Dorsolateral prefrontal cortex (tissue), 120 donors: ENCODE measurements at regions of chr6 and their contacts with region 1.

Region 1: DNA sequence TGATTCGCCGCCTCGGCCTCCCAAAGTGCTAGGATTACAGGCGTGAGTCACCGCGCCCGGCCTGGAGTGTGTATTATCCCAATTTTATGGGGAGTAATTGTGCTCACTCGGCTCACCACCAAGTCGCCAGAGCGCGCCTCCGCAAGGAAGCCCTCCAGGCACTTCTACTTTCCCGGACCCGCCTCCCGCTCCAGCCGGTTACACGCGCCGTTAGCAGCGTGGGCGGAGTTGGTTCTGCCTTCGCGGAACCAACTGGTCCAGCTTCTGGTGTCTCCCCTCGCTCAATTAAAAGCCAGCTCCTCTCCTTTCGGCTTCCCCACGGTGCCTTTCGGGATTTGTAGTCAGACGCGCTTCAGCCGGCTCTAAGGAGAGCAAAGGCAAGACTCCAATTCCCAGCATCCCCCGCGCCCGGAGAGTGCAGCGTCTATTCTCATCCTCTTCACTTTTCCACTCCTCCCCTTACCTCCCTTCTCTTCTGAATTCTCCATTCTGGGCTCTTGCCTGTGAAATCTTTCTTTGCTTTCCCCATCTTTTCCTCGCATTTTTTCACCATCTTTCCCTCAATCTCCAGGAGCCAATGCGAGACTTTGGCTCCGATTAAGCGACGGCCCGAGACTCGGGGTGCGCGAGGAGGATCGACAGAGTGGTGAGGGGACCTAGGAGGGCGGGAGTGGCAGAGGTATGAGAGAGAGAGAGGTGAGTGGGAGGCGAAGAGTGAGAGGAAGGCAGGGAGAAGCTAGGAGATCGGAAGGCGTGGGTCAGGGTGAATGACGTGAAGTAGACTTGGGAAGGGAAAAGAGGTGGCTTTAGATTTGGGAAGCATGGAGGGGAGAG is at the start of gene GTF2H4:
- DNase-seq: peak; percentile 95 to 98 (median 97)
- H3K4me3 ChIP-seq: peak within 1 kb of the TSS; percentile 63 to 99 (median 86)
- H3K27ac ChIP-seq: peak within 1 kb of the TSS in 46 of 59 donors; percentile 9 to 84 (median 63)
- H3K27me3 ChIP-seq: no peaks in the 10 kb centered on the region
- CTCF ChIP-seq: peak in 39 of 56 donors; percentile 7 to 67 (median 39)
- total RNA-seq, gene GTF2H4: 24.7 to 107 (median 48.9) TPM

Region 2: DNA sequence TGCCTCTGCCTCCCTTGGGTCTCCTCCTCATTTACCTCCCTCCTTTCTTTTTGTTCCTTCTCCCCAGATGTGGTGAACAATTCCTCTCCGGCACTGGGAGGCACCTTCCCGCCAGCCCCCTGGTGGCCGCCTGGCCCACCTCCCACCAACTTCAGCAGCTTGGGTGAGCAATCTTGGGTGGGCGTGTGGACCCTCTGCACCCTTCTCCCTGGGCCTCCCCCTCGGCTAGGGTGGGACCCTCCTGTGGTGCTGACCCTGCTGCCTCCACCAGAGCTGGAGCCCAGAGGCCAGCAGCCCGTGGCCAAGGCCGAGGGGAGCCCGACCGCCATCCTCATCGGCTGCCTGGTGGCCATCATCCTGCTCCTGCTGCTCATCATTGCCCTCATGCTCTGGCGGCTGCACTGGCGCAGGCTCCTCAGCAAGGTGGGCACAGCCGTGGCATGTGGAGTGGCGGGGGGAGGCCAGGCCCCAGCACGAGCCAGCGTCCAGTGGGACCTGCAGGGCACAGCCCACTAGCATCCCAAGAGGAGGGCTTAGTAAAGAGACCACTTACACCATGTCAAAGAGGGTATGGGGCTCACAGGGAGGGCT is 14.9 kb before region 1 on chr6:
- intact Hi-C with region 1: loop called in 1 of 2 experiments (anchors 2 kb)
- DNase-seq: peak in 1 of 10 donors; percentile 30
- H3K4me3 ChIP-seq: peak overlapping the region in 1 of 59 donors; percentile 16
- H3K27ac ChIP-seq: peak overlapping the region in 52 of 59 donors; percentile 1 to 99 (median 72)
- H3K27me3 ChIP-seq: no peaks in the 10 kb centered on the region
- CTCF ChIP-seq: peak in 3 of 56 donors; percentile 11 to 30 (median 22)